Aorta (tissue), 5 donors: ENCODE measurements at regions of chr20 and their contacts with region 1.

Region 1: GRCh38 chr20:58112017-58112781 is 116.3 kb downstream of the ANKRD60 start:
- DNase-seq: no peak
- ATAC-seq: no peak
- H3K4me3 ChIP-seq: no peak overlapping the region
- H3K27ac ChIP-seq: peak overlapping the region in 1 of 2 donors; percentile 63
- H3K4me1 ChIP-seq: peaks cover 2 to 3% of the 10 kb centered on the region in 2 donors
- H3K27me3 ChIP-seq: no peaks in the 10 kb centered on the region

Region 2: GRCh38 chr20:58149437-58150105 is 37.4 kb after region 1 on chr20:
- intact Hi-C with region 1: loop called in 1 of 2 experiments (anchors 5 kb)
- DNase-seq: peak in 1 of 2 donors; percentile 66
- ATAC-seq: no peak
- H3K4me3 ChIP-seq: no peak overlapping the region
- H3K27ac ChIP-seq: no peak overlapping the region
- H3K4me1 ChIP-seq: peaks cover 3 to 8% of the 10 kb centered on the region in 2 donors
- H3K27me3 ChIP-seq: no peaks in the 10 kb centered on the region